ENCODE measurements at regions of chr3 and their contacts with region 1.

Region 1: GRCh38 chr3:195542698-195543499 is at the start of gene PPP1R2:
- DNase-seq: peak; percentile 75
- ATAC-seq: peak; percentile 85
- H3K4me3 ChIP-seq: peak within 1 kb of the TSS; percentile 78 to 91 (median 87)
- H3K27ac ChIP-seq: peak within 1 kb of the TSS; percentile 85
- H3K4me1 ChIP-seq: peaks cover 76% of the 10 kb centered on the region
- H3K27me3 ChIP-seq: no peaks in the 10 kb centered on the region; a peak in 1 of 5 replicates
- CTCF ChIP-seq: no peak
- EP300 ChIP-seq: no peak
- POLR2A ChIP-seq: peak; percentile 91 to 96
- RAD21 ChIP-seq: peak; percentile 54
- total RNA-seq, gene PPP1R2: 36.5 and 65.6 TPM in 2 replicates

Region 2: GRCh38 chr3:194129581-194130133 is 1413.2 kb before region 1 on chr3:
- CTCF ChIA-PET with region 1: no interaction called
- POLR2A ChIA-PET with region 1: no interaction called
- in situ Hi-C with region 1: no loop called
- intact Hi-C with region 1: loop called (anchors 10 kb)
- DNase-seq: peak; percentile 80
- ATAC-seq: peak; percentile 12
- H3K4me3 ChIP-seq: peak overlapping the region; percentile 65 to 71 (median 70)
- H3K27ac ChIP-seq: peak overlapping the region; percentile 85
- H3K4me1 ChIP-seq: peaks cover 49% of the 10 kb centered on the region
- H3K27me3 ChIP-seq: no peaks in the 10 kb centered on the region; a peak in 1 of 5 replicates
- CTCF ChIP-seq: no peak
- EP300 ChIP-seq: peak in 1 of 2 experiments; percentile 60; a peak in 1 of 4 replicates
- POLR2A ChIP-seq: no peak; a peak in 2 of 4 replicates
- RAD21 ChIP-seq: no peak

Region 3: DNA sequence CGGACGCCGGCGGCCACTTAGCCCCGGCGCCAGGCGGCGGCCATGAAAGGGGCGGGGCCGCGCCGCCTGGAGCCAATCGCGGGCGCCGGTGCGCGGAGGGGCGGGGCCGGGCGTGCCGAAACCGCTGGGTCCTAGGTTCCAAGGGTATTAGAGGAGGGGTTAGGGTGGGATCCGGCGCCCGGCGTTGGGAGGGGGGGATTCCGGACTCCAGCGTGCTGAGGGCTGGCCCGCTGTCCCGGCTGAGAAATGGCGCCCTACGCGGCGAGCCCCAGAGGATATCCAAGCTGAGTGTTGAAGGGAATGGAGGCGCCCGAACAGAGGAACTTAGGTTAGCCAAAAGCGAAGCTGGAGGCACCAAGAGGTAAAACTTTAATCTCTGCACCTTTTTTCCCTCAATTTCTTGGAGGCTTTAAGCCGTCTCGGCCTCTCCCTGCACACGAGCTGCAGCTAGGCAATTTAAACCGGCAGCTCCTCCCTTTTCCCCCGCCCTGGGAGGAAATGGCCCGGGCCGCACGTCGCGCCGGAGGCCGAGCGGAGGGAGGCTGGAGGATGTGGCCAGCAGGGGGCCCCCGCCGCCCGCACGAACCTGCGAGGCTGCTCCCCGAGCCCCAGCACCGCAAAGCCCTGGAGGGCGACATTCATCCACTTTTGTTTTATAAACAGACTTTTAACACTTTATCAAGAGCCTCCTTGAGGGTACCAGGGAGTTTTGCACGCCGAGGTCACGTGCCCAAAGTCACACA is 271.6 kb before region 1 on chr3 and contains the start of gene XXYLT1:
- CTCF ChIA-PET with region 1: no interaction called
- POLR2A ChIA-PET with region 1: interaction called, 22 read pairs
- in situ Hi-C with region 1: loop called (anchors 5 kb)
- intact Hi-C with region 1: loop called (anchors 5 kb)
- DNase-seq: peak; percentile 81
- ATAC-seq: peak; percentile 89
- H3K4me3 ChIP-seq: peak within 1 kb of the TSS; percentile 89 to 92 (median 91)
- H3K27ac ChIP-seq: peak within 1 kb of the TSS; percentile 85
- H3K4me1 ChIP-seq: peaks cover 60% of the 10 kb centered on the region
- H3K27me3 ChIP-seq: no peaks in the 10 kb centered on the region; a peak in 1 of 5 replicates
- CTCF ChIP-seq: peak; percentile 96
- EP300 ChIP-seq: no peak
- POLR2A ChIP-seq: peak; percentile 52 to 54; a peak in 2 of 4 replicates
- RAD21 ChIP-seq: peak; percentile 95
- total RNA-seq, gene XXYLT1: 10.8 and 19.0 TPM in 2 replicates

Measured in HepG2 (cell line).